ENCODE measurements at regions of chr3 and their contacts with region 1.

Region 1: GRCh38 chr3:124995460-124995994 is 60.3 kb downstream of the HEG1 start:
- DNase-seq: peak; percentile 67
- H3K4me3 ChIP-seq: no peak overlapping the region
- H3K27ac ChIP-seq: no peak overlapping the region
- H3K4me1 ChIP-seq: peaks cover 7% of the 10 kb centered on the region
- H3K27me3 ChIP-seq: no peaks in the 10 kb centered on the region
- CTCF ChIP-seq: peak; percentile 56 to 65
- POLR2A ChIP-seq: no peak

Region 2: DNA sequence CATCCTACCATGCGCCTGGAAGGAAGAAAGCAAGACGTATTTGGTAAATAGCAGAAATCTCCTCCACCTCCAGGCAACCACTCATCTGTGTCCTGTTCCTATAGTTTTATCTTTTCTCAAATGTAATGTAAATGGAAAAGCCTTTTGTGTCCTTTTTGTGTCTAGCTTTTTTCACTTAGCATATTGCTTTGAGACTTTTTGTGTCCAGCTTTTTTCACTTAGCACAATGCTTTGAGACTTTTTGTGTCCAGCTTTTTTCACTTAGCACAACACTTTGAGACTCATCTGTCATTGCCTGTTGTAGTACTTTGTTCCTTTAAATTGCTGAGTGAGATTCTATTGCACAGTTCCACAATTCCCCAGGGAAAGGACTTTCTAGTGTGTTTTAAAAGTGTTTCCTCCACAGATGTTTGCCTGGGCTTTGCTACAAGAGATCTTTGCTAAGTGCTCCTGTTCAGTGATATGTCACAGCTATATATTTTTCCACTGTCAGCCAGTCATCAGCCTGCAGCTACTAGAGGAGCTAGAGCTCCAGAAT is 33.1 kb before region 1 on chr3:
- CTCF ChIA-PET with region 1: no interaction called
- POLR2A ChIA-PET with region 1: no interaction called
- dilution Hi-C with region 1: no loop called
- intact Hi-C with region 1: no loop called
- DNase-seq: no peak
- H3K4me3 ChIP-seq: no peak overlapping the region
- H3K27ac ChIP-seq: no peak overlapping the region
- H3K4me1 ChIP-seq: peaks cover 3% of the 10 kb centered on the region
- H3K27me3 ChIP-seq: peaks cover 0 to 2% of the 10 kb centered on the region in 2 experiments
- CTCF ChIP-seq: no peak
- POLR2A ChIP-seq: no peak

Region 3: DNA sequence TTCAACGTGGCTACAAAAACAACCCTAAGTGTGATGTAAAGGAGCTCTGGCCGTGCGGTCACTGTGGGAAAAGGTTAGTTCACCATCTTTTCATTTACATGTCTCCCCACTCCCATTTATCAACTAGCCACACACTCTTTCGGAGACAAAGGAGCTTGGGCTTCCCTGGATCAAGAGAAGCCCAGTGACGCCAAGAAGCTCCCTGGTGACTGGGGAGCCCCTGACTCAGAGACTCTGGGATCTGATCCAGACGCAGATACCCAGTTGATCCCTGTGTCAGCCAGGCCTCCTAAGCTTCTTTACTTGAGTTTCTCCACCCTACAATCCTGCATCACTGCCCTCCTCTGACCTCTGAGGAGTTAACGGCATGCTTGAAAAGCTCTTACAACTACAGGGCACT is 16.4 kb after region 1 on chr3:
- CTCF ChIA-PET with region 1: no interaction called
- POLR2A ChIA-PET with region 1: no interaction called
- dilution Hi-C with region 1: no loop called
- intact Hi-C with region 1: no loop called
- DNase-seq: no peak
- H3K4me3 ChIP-seq: no peak overlapping the region
- H3K27ac ChIP-seq: no peak overlapping the region
- H3K4me1 ChIP-seq: no peaks in the 10 kb centered on the region
- H3K27me3 ChIP-seq: no peaks in the 10 kb centered on the region
- CTCF ChIP-seq: no peak
- POLR2A ChIP-seq: no peak

Region 4: GRCh38 chr3:125165189-125165947 is 169.8 kb after region 1 on chr3:
- CTCF ChIA-PET with region 1: interaction called, 17 read pairs
- POLR2A ChIA-PET with region 1: no interaction called
- dilution Hi-C with region 1: no loop called
- intact Hi-C with region 1: loop called (anchors 1 kb)
- DNase-seq: peak; percentile 53
- H3K4me3 ChIP-seq: no peak overlapping the region
- H3K27ac ChIP-seq: no peak overlapping the region
- H3K4me1 ChIP-seq: no peaks in the 10 kb centered on the region
- H3K27me3 ChIP-seq: peaks cover 0 to 2% of the 10 kb centered on the region in 2 experiments
- CTCF ChIP-seq: peak; percentile 58 to 88
- POLR2A ChIP-seq: no peak

Region 5: DNA sequence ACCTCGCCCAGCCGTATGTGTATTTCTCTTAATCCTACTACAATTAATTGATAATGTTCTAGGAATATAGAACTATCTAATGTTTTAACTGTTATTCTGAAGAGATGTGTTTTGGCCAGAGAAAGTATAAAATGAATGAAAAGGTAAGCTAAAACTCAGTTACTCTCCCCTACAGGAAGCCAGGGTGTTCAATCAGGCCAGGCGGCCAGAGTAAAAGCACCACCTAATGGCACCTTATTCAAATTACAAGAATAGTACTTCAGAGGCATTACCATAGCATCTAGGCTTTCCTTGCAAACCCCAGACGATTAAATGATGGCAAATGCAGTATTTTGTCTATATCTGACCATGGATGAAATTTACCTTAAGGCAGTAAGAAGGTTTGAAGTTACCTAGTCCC is 206.7 kb after region 1 on chr3:
- CTCF ChIA-PET with region 1: interaction called, 11 read pairs
- POLR2A ChIA-PET with region 1: no interaction called
- dilution Hi-C with region 1: no loop called
- intact Hi-C with region 1: loop called (anchors 1 kb)
- DNase-seq: no peak
- H3K4me3 ChIP-seq: no peak overlapping the region
- H3K27ac ChIP-seq: no peak overlapping the region
- H3K4me1 ChIP-seq: no peaks in the 10 kb centered on the region
- H3K27me3 ChIP-seq: no peaks in the 10 kb centered on the region
- CTCF ChIP-seq: no peak
- POLR2A ChIP-seq: no peak